BJ (cell line): ENCODE measurements at regions of chrX and their contacts with region 1.

Region 1: GRCh38 chrX:153662266-153662665 is 11.3 kb downstream of the PNCK start:
- DNase-seq: no peak
- H3K4me3 ChIP-seq: no peak overlapping the region
- H3K27me3 ChIP-seq: no peaks in the 10 kb centered on the region; the same call in none of the 2 replicates
- CTCF ChIP-seq: peak; percentile 51

Region 2: DNA sequence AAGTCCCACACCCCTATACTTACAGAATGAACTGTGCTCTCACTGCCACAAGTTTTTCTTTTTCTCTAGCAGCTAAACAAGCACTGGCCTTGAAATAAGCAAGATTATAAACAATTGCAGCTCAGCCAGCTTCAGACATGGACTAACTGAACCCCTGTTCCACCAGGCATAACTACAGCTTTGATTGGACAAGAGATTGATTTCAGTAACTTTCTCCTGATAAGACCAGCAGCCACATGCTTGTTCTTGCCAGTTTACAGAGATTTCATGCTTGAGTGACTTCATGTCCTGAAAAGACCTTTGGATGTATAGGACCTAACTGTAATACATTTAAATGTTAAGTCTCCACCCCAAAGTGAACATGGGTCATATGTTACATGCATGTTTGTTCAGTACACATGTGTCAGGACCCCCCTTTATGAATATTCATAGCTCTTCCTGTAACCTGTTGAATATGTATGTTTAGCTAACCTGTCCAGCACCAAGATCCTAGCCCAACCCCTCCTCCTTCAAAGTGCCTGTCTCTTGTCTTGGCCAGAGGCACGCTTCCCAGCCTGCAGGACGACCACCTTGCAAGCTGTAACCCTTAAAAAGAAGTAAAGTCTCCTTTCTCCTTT is 300.4 kb before region 1 on chrX:
- CTCF ChIA-PET with region 1: no interaction called
- POLR2A ChIA-PET with region 1: no interaction called
- DNase-seq: no peak
- H3K4me3 ChIP-seq: no peak overlapping the region
- H3K27me3 ChIP-seq: no peaks in the 10 kb centered on the region; the same call in 1 of the 2 replicates
- CTCF ChIP-seq: no peak

Region 3: GRCh38 chrX:153539171-153539978 is 122.9 kb before region 1 on chrX:
- CTCF ChIA-PET with region 1: interaction called, 52 read pairs
- POLR2A ChIA-PET with region 1: no interaction called
- DNase-seq: no peak
- H3K4me3 ChIP-seq: no peak overlapping the region
- H3K27me3 ChIP-seq: no peaks in the 10 kb centered on the region; the same call in 1 of the 2 replicates
- CTCF ChIP-seq: peak; percentile 90

Region 4: GRCh38 chrX:153554519-153555167 is 107.6 kb before region 1 on chrX:
- CTCF ChIA-PET with region 1: interaction called, 55 read pairs
- POLR2A ChIA-PET with region 1: no interaction called
- DNase-seq: no peak
- H3K4me3 ChIP-seq: no peak overlapping the region
- H3K27me3 ChIP-seq: no peaks in the 10 kb centered on the region
- CTCF ChIP-seq: peak; percentile 72

Region 5: GRCh38 chrX:153609917-153610428 is 52.3 kb before region 1 on chrX:
- CTCF ChIA-PET with region 1: interaction called, 19 read pairs
- POLR2A ChIA-PET with region 1: no interaction called
- DNase-seq: no peak
- H3K4me3 ChIP-seq: peak overlapping the region; percentile 39
- H3K27me3 ChIP-seq: 0 out of 2 replicates have a peak, but pooled peaks cover 2% of the 10 kb centered on the region
- CTCF ChIP-seq: peak; percentile 80